BJ (cell line): ENCODE measurements at regions of chr19 and their contacts with region 1.

Region 1: GRCh38 chr19:46542428-46543230 is 47.0 kb upstream of the PNMA8B start:
- DNase-seq: peak; percentile 50
- H3K4me3 ChIP-seq: no peak overlapping the region
- H3K27me3 ChIP-seq: no peaks in the 10 kb centered on the region
- CTCF ChIP-seq: peak; percentile 80

Region 2: DNA sequence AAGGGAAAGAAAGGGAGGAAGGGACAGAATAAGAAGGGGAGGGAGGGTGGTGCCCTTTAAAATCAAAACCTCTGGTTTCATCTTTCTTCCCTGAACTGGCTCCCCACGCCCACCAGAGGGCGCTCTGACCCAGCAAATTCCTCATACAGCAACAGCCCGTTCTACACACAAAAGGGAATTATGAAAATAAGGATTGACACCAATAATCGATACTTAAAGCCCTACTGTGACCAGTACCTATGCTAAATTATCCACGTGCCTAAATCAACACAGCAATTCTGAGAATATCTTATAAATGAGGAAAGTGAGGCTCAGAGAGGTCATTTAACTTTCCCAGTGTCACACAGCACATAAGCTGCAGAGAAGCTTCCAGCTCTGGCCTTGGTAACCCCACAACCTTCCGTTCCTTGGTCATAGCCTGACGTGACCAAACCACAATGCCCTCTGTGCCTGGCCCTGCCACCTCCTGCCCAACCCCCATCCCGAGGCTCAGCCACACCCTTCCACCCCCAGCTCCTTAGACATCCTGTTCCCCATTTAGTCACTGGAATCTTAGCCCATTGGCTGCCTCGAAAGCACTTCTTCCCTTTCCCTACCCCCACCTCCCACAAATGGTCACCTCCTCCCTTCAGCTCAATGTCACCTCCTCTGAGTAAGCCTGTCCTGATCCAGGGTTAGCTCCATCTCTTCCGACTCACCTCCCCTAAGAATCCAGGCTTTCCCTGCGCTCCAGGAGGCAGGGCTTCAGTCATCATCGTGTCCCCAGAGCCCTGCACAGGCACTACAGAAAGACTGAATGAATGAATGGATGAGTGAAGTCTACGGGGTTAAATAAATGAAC is 12.8 kb before region 1 on chr19:
- CTCF ChIA-PET with region 1: interaction called, 48 read pairs
- POLR2A ChIA-PET with region 1: no interaction called
- DNase-seq: no peak
- H3K4me3 ChIP-seq: no peak overlapping the region
- H3K27me3 ChIP-seq: no peaks in the 10 kb centered on the region; the same call in 1 of the 2 replicates
- CTCF ChIP-seq: peak; percentile 93